MCF 10A (cell line): ENCODE measurements at regions of chr20 and their contacts with region 1.

Region 1: DNA sequence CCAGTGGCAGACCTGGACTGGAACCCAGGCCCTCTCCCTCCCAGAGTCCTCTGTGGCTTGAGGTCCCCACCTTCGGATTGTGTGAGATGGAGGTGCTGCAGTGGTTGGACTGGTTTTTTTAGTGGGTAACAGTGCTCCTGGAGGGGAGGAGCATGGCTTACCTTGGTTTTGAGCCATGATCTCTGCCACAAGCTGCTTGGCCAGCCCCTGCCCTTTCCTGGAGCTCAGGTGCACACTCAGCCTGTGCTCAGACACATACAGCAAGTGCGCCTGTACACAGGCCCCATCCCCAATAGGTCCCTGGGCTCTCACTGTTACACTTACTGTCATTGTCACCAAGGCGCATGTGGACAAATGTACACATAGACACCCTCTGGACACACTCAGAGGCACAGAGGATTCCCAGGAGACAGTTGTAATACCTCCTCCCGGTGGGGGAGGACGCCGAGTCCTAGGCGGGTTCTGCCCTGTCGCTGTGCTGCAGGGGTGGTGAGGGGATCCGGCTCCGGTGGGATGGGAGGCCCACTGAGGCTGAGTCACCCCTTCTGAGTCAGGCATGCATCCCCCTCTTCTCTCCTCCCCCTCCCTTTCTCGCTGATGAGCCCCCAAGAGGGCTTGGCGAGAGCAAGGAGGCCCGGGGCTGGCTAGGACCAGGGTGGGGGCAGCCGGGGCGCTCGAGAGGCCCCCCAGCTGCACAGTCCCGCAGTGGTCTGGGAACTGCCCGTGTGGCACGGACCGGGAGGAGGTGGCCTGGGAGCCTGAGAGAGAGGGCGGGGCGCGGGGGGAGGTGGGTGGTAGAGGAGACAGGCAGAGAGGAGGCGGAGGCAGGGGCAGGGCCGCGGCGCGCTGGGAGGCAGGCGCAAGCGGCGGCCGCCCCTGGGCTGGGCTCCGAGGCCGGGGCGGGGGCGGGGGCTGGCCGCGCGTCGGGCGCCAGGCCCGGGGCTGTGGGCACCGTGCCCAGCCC is 522 bp upstream of the EPB41L1 start:
- DNase-seq: peak; percentile 70
- H3K4me3 Mint-ChIP-seq: peak overlapping the region; percentile 58
- H3K27ac Mint-ChIP-seq: no peak overlapping the region
- H3K4me1 Mint-ChIP-seq: no peaks in the 10 kb centered on the region
- H3K27me3 Mint-ChIP-seq: no peaks in the 10 kb centered on the region
- CTCF ChIP-seq: no peak

Region 2: GRCh38 chr20:35762481-35763245 is 391.4 kb before region 1 on chr20:
- CTCF ChIA-PET with region 1: no interaction called
- POLR2A ChIA-PET with region 1: no interaction called
- intact Hi-C with region 1: no loop called
- DNase-seq: no peak
- H3K4me3 Mint-ChIP-seq: no peak overlapping the region
- H3K27ac Mint-ChIP-seq: no peak overlapping the region
- H3K4me1 Mint-ChIP-seq: no peaks in the 10 kb centered on the region
- H3K27me3 Mint-ChIP-seq: no peaks in the 10 kb centered on the region
- CTCF ChIP-seq: no peak

Region 3: DNA sequence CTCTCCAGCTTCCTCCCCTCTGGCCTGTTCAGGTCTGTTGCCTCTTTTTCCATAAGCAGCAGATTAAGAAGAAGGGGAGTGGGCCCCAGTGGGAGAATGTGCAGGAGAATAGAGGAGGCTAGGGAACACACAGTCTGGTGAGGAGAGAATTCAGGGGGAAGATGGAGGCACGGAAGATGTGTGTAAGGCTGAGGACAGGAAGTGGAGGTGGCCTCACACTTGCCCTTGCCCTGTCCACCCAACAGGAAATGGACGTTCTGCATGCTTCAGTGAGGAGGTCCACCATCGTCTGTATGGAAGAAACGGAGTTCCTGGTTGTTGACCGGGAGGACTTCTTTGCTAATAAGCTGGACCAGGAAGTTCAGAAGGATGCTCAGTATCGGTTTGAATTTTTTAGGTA is 169.6 kb before region 1 on chr20:
- CTCF ChIA-PET with region 1: interaction called, 705 read pairs
- POLR2A ChIA-PET with region 1: no interaction called
- intact Hi-C with region 1: no loop called
- DNase-seq: no peak
- H3K4me3 Mint-ChIP-seq: no peak overlapping the region
- H3K27ac Mint-ChIP-seq: no peak overlapping the region
- H3K4me1 Mint-ChIP-seq: peaks cover 6% of the 10 kb centered on the region
- H3K27me3 Mint-ChIP-seq: peaks cover 6% of the 10 kb centered on the region
- CTCF ChIP-seq: no peak

Region 4: DNA sequence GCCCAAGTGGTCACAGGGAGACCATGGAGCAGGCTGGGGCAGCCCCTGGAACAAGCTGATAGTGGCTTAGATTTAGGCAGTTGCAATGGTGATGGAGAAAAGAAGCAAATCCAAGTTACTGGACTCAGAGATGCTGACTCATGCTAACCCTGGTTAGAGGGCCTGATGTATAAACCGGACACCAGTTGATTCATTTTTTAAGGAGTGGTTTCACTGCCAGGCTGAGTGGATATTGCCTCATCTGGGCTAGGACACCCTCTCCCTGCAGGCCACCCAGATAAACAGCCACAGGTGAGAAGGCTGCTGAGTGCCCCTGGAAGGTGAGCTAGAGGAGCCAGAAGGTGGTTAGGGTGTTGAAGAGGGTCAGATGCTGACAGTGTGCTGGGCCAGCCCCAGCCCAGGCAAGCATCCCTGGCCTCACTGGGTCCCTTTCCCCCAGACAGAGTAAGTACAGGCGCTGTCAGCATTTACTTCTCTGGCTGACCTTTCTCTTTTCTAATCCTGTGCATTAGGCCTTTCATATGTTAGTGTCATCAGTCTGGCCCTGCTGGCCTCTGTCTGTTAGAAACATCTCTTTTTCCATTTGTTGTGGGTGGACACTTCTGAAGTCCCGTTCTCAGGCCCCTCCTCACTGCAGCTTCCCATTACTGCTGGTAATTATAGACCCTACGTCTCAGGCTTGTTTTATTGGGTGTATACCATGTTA is 14.0 kb after region 1 on chr20:
- CTCF ChIA-PET with region 1: interaction called, 14 read pairs
- POLR2A ChIA-PET with region 1: no interaction called
- intact Hi-C with region 1: no loop called
- DNase-seq: peak; percentile 85
- H3K4me3 Mint-ChIP-seq: no peak overlapping the region
- H3K27ac Mint-ChIP-seq: peak overlapping the region; percentile 55
- H3K4me1 Mint-ChIP-seq: peaks cover 13% of the 10 kb centered on the region
- H3K27me3 Mint-ChIP-seq: no peaks in the 10 kb centered on the region
- CTCF ChIP-seq: no peak